ENCODE measurements at regions of chr1 and their contacts with region 1.

Region 1: GRCh38 chr1:172745014-172745413 is 86.1 kb downstream of the FASLG start:
- DNase-seq: peak; percentile 30 to 79
- ATAC-seq: peak; percentile 80 to 88
- H3K4me3 ChIP-seq: no peak overlapping the region
- H3K27ac ChIP-seq: peak overlapping the region in 1 of 2 experiments; percentile 72; a peak in 1 of 6 replicates
- H3K4me1 ChIP-seq: peaks cover 23% of the 10 kb centered on the region
- CTCF ChIP-seq: peak; percentile 87
- EP300 ChIP-seq: no peak
- POLR2A ChIP-seq: no peak
- RAD21 ChIP-seq: peak; percentile 94 to 95

Region 2: DNA sequence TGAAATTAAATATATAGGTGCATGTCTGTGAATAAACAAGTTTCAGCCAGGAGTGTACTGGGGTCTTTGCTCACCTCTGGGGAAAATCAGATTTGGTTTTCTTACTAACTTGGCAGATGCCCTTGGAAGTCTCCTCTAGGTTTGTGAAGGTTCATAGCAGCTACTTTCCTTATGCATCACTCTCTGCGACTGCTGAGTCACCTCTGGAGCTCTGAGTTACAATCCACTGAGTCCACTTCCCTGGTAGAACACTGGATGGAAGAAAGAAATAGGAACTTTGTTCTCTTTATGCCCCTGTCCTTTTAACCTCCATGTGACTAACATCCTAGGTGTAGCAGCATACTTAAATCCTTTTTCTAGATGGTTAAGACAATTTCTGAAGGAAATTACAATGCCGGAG is 90.5 kb before region 1 on chr1:
- CTCF ChIA-PET with region 1: no interaction called
- POLR2A ChIA-PET with region 1: no interaction called
- DNase-seq: peak; percentile 28 to 41
- ATAC-seq: peak; percentile 74 to 83; a peak in 5 of 6 replicates
- H3K4me3 ChIP-seq: no peak overlapping the region
- H3K27ac ChIP-seq: peak overlapping the region; percentile 41 to 67; a peak in 5 of 6 replicates
- H3K4me1 ChIP-seq: peaks cover 27% of the 10 kb centered on the region
- CTCF ChIP-seq: no peak
- EP300 ChIP-seq: no peak
- POLR2A ChIP-seq: no peak
- RAD21 ChIP-seq: no peak

Region 3: GRCh38 chr1:172727956-172728603 is 16.9 kb before region 1 on chr1:
- CTCF ChIA-PET with region 1: interaction called, 13 read pairs
- POLR2A ChIA-PET with region 1: no interaction called
- DNase-seq: peak in 1 of 2 experiments; percentile 82
- ATAC-seq: peak; percentile 54 to 92; a peak in 4 of 6 replicates
- H3K4me3 ChIP-seq: no peak overlapping the region
- H3K27ac ChIP-seq: no peak overlapping the region
- H3K4me1 ChIP-seq: no peaks in the 10 kb centered on the region
- CTCF ChIP-seq: peak; percentile 28
- EP300 ChIP-seq: no peak
- POLR2A ChIP-seq: no peak
- RAD21 ChIP-seq: peak in 1 of 2 experiments; percentile 64; a peak in 2 of 5 replicates

Region 4: GRCh38 chr1:172826096-172826743 is 81.2 kb after region 1 on chr1:
- CTCF ChIA-PET with region 1: interaction called, 53 read pairs
- POLR2A ChIA-PET with region 1: no interaction called
- DNase-seq: peak; percentile 44 to 75
- ATAC-seq: peak; percentile 89 to 94
- H3K4me3 ChIP-seq: no peak overlapping the region
- H3K27ac ChIP-seq: peak overlapping the region; percentile 68 to 74
- H3K4me1 ChIP-seq: peaks cover 16% of the 10 kb centered on the region
- CTCF ChIP-seq: peak; percentile 85
- EP300 ChIP-seq: no peak
- POLR2A ChIP-seq: no peak
- RAD21 ChIP-seq: peak; percentile 97

Region 5: DNA sequence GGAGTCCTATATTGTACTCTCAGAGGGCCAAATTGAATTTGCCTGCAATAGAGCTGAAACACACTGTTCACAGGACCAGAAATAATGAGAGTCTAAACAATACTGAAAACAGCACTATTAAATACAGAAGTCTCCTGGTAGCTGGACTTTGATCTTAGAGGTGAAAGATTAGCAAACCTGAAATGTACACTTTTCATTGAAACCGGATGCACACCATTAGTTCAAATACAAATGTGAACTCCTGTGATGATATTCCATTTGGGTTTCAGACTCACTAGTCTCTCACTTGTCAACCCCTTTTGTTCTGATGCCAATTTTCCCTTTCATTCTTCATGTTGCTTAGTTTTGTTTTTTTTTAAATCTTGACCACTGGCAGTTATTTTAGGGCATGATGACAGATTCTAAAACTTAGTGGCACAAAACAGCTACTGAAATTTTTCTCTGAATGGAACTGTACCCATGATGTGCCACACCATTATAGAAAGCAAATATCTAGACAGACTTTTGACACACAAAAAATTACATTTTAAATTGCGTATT is 468.0 kb after region 1 on chr1:
- CTCF ChIA-PET with region 1: interaction called, 212 read pairs
- POLR2A ChIA-PET with region 1: no interaction called
- DNase-seq: no peak
- ATAC-seq: no peak
- H3K4me3 ChIP-seq: no peak overlapping the region
- H3K27ac ChIP-seq: no peak overlapping the region
- H3K4me1 ChIP-seq: no peaks in the 10 kb centered on the region
- CTCF ChIP-seq: no peak
- EP300 ChIP-seq: no peak
- POLR2A ChIP-seq: no peak
- RAD21 ChIP-seq: no peak

Region 6: DNA sequence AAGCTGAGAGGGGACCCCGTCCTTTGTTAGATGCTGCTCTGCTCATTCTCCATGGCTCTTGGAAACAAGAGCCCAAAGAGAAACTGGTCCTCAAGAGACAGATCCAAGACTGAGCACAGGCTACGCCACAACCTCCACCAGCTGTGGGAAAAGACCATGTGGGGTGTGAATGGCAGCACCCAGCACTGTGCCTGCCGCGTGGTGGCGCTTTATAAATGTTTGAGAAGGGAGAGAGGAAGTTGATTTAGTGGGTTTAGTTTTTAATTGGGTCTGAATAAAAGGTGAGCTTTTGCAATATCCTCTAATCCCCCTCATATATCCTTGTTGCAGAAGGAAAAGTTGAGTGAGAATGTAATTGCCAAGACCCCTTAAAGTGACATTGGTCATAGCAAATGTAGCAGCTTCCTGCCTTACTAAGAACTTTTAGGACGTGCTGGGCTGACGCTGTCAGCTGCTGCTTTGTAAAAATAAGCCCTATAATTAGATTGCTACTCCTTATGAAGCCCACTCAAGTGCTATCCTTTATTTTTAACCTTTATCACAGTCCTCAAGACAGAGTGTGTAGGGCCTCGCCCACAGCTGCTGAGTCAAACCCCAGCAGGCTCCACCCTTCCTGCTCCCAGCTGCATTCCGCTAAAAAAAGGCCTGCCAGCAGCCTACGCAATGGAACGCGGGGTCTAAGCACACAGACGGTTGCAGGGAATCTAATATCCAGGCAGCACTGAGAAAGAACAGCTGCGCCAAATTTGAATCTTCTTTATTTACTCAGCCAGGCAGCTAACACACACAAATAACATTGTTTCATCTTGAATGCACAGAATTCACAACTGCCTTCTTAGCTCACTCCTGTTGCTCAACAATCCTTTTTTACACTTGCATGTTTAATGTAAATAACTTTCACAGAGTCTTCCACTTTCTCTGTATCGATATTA is 684.7 kb after region 1 on chr1:
- CTCF ChIA-PET with region 1: interaction called, 59 read pairs
- POLR2A ChIA-PET with region 1: no interaction called
- DNase-seq: peak; percentile 46 to 67
- ATAC-seq: peak; percentile 92 to 94
- H3K4me3 ChIP-seq: no peak overlapping the region
- H3K27ac ChIP-seq: peak overlapping the region; percentile 60 to 81
- H3K4me1 ChIP-seq: peaks cover 29% of the 10 kb centered on the region
- CTCF ChIP-seq: peak; percentile 56
- EP300 ChIP-seq: no peak
- POLR2A ChIP-seq: no peak
- RAD21 ChIP-seq: peak; percentile 29 to 41; a peak in 3 of 5 replicates